RWPE1 (cell line): ENCODE measurements at regions of chr1 and their contacts with region 1.

Region 1: GRCh38 chr1:201468844-201469511 is at the start of gene PHLDA3:
- DNase-seq: peak; percentile 94
- H3K27ac ChIP-seq: peak within 1 kb of the TSS; percentile 100
- CTCF ChIP-seq: no peak

Region 2: DNA sequence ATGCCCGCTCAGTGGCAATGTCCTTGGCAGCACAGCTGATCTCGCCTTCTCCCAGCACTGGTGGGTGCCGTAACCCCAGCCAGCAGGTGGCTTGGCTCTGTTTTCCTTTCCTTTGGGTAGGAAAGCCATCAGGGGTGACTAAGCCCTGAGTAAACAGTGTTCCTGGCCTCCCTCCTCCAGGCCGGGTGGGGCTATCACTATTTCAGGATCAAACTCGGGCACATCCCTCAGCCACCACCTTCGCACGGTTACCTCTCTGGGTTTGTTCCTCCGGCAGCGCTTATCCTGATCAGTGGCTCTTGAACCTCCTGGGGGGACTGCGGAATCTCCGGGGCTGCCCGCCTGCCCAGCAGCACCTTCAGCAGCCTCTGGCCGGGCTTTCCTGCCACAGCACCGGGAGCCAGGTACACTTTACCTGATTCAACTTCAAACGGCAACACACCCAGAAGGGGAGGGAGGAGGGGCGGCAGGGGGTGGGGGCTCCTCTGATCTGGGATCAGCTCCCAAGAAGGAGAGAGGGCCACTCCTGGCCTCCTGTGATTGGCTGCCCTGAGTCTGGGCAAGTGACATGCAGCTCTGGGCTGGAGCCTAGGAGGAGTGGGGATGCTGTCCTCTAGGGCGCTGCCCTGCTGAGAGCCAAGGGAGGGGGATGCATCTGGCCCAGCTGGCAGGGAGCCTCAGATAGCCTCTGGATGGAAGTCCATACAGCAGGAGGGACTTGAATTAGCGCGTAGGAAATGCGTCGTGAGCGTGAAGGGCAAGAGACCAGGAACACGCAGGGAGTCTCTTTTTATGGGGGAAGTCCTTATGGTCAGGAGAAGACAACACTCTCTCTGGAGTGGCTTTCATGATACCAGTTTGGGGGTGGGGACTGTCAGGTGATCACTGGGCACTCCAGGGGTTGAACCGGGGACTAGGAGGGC is 341.9 kb before region 1 on chr1 and contains the start of gene ASCL5:
- CTCF ChIA-PET with region 1: no interaction called
- POLR2A ChIA-PET with region 1: no interaction called
- DNase-seq: peak; percentile 97
- H3K27ac ChIP-seq: peak within 1 kb of the TSS; percentile 22; the same call in 1 of the 2 replicates
- CTCF ChIP-seq: no peak

Region 3: GRCh38 chr1:201447911-201448871 is 20.8 kb before region 1 on chr1:
- CTCF ChIA-PET with region 1: interaction called, 18 read pairs
- POLR2A ChIA-PET with region 1: interaction called, 8 read pairs
- DNase-seq: peak; percentile 91
- H3K27ac ChIP-seq: peak overlapping the region; percentile 58
- CTCF ChIP-seq: peak; percentile 90